H1 (cell line): ENCODE measurements at regions of chr4 and their contacts with region 1.

Region 1: DNA sequence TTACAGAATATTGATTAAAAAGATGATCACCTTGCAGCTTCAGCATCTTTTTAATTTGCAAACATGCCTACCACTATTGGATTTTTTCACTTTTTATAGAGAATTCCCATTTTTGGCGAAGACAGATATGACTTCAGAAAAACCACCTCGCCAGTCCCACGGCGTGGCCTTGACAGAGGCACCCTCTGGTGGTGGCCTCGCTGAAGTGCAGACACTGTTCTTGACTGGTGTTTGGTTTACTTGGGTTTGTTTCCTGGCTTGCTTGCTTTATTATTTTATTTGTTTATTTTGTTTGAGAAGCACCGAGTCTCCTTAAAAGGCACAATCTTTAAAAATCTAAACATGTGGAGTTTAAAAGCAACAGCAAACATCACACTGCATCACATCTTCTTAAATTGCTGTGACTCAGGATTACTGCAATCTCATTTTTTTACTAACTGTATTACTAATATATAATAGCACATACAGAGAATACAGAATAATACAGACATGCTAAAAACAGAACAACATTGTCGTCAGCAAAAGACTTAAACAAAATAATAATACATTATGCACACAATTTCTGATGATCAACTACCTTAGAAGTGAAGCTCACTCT is 13.1 kb upstream of the AMTN start:
- DNase-seq: peak; percentile 19 to 81
- H3K4me3 ChIP-seq: no peak overlapping the region
- H3K27ac ChIP-seq: no peak overlapping the region
- H3K4me1 ChIP-seq: no peaks in the 10 kb centered on the region
- H3K27me3 ChIP-seq: no peaks in the 10 kb centered on the region
- CTCF ChIP-seq: peak; percentile 84 to 97 (median 92)
- EP300 ChIP-seq: no peak
- POLR2A ChIP-seq: no peak
- RAD21 ChIP-seq: peak; percentile 98

Region 2: GRCh38 chr4:70315928-70316327 is 189.3 kb before region 1 on chr4:
- CTCF ChIA-PET with region 1: interaction called, 21 read pairs
- POLR2A ChIA-PET with region 1: no interaction called
- DNase-seq: no peak
- H3K4me3 ChIP-seq: no peak overlapping the region
- H3K27ac ChIP-seq: no peak overlapping the region
- H3K4me1 ChIP-seq: peaks cover 0 to 2% (median 0%) of the 10 kb centered on the region in 4 experiments; a peak in 1 of 7 replicates
- H3K27me3 ChIP-seq: no peaks in the 10 kb centered on the region
- CTCF ChIP-seq: peak in 2 of 3 experiments; percentile 32 to 35; a peak in 2 of 4 replicates
- EP300 ChIP-seq: no peak
- POLR2A ChIP-seq: no peak
- RAD21 ChIP-seq: peak; percentile 62

Region 3: GRCh38 chr4:70337886-70338420 is 167.3 kb before region 1 on chr4:
- CTCF ChIA-PET with region 1: no interaction called
- POLR2A ChIA-PET with region 1: no interaction called
- DNase-seq: no peak
- H3K4me3 ChIP-seq: no peak overlapping the region
- H3K27ac ChIP-seq: no peak overlapping the region
- H3K4me1 ChIP-seq: no peaks in the 10 kb centered on the region
- H3K27me3 ChIP-seq: no peaks in the 10 kb centered on the region
- CTCF ChIP-seq: no peak
- EP300 ChIP-seq: no peak
- POLR2A ChIP-seq: no peak
- RAD21 ChIP-seq: no peak